MCF 10A (cell line): ENCODE measurements at regions of chr2 and their contacts with region 1.

Region 1: GRCh38 chr2:119264781-119265692 is 41.4 kb downstream of the STEAP3 start:
- DNase-seq: peak; percentile 75
- H3K4me3 Mint-ChIP-seq: no peak overlapping the region
- H3K27ac Mint-ChIP-seq: no peak overlapping the region
- H3K4me1 Mint-ChIP-seq: peaks cover 9% of the 10 kb centered on the region
- H3K27me3 Mint-ChIP-seq: no peaks in the 10 kb centered on the region
- CTCF ChIP-seq: peak; percentile 84

Region 2: DNA sequence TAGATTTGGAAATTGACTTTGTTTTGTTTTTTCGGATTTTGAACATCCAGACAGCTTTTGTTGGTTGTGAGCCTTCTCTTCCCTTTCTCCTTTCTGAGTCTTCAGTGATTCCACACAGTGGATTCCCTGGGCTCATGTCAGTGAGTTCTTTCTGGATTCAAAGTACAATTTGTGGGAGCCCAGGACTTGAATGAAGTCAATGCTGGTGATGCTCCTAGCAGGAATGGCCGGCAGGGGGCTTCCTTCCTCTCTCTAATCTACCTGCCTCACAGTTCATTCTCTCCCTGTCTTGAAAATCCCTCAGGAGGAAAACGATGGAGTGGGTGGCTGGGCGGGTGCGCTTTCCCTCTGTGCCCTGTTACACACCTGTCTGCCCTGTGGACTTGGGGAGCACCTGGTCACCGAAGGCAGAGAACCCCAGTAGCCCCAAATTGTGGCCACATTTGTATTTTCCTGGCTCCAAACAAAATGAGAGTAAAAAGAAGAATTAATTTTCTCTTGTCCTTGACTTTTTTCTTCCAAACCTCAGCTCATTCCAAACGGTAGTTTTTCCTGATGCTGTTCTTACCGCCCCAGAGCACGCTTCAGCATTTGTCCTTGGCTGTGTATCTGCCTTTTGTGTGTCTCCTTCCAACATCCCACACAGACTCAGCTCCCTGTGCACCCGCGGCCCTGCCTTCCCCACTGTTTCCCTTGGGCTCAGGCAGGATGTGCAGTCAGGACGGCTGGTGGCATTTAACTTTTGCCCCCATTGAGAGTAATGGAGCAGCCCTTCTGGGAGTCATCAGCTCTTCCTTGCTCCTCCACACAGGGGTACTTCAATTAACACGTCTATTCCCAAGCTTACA is 236.5 kb before region 1 on chr2:
- CTCF ChIA-PET with region 1: interaction called, 6 read pairs
- POLR2A ChIA-PET with region 1: no interaction called
- intact Hi-C with region 1: loop called (anchors 1 kb)
- DNase-seq: peak; percentile 65
- H3K4me3 Mint-ChIP-seq: no peak overlapping the region
- H3K27ac Mint-ChIP-seq: no peak overlapping the region
- H3K4me1 Mint-ChIP-seq: no peaks in the 10 kb centered on the region
- H3K27me3 Mint-ChIP-seq: peaks cover 48% of the 10 kb centered on the region
- CTCF ChIP-seq: peak; percentile 37

Region 3: DNA sequence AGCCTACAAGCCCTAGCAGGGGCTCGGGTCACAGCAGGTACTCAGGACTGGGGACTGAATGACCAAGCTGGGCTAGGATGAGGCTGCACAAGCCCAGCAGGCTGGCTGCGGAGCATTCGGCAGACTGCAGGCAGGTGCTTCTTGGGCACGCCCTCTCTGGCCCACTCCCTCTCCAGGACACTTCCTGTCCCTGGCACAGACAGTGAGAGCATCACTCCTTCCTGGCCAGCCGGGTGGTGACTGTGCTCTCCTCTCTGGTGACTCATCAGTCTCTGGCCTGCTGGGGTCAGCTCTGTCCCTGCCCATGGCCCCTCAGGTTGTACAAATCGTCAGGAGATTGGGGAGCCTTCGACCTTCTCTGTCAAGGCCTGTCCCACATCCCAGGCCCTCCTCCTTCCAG is 128.9 kb before region 1 on chr2:
- CTCF ChIA-PET with region 1: no interaction called
- POLR2A ChIA-PET with region 1: no interaction called
- intact Hi-C with region 1: no loop called
- DNase-seq: peak; percentile 8
- H3K4me3 Mint-ChIP-seq: no peak overlapping the region
- H3K27ac Mint-ChIP-seq: no peak overlapping the region
- H3K4me1 Mint-ChIP-seq: no peaks in the 10 kb centered on the region
- H3K27me3 Mint-ChIP-seq: peaks cover 63% of the 10 kb centered on the region
- CTCF ChIP-seq: no peak

Region 4: DNA sequence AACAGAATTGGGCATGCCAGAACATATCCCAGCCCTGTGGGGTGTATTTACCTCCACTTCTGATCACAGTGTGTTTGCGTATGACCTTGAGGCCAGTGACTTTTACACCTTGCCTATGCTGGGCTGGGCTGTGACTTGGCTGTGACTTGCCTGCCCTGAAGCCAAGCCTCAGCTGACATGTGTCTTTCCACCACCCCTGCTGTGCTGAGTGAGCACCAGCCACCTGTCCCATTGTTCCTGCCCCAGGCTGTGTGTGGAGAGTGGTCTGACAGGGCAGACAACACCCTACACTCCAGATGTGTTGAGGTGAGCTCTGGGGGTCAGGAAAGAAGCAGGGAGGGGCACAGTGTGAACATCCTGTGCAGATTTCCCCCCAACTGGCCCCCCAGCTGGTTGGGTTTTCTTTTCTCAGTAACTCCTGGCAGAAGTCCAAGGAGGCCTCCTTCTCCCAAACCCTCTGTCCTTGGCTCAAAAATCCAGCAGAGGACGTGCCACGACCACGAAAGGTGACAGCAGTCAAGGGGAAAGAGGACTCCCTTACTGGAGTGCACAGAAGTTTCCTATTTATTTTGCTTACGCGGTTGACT is 46.5 kb before region 1 on chr2:
- CTCF ChIA-PET with region 1: interaction called, 56 read pairs
- POLR2A ChIA-PET with region 1: interaction called, 3 read pairs
- intact Hi-C with region 1: loop called (anchors 1 kb)
- DNase-seq: peak; percentile 87
- H3K4me3 Mint-ChIP-seq: peak overlapping the region; percentile 21
- H3K27ac Mint-ChIP-seq: peak overlapping the region; percentile 91
- H3K4me1 Mint-ChIP-seq: peaks cover 33% of the 10 kb centered on the region
- H3K27me3 Mint-ChIP-seq: no peaks in the 10 kb centered on the region
- CTCF ChIP-seq: peak; percentile 54

Region 5: GRCh38 chr2:119234377-119235019 is 30.5 kb before region 1 on chr2:
- CTCF ChIA-PET with region 1: interaction called, 14 read pairs
- POLR2A ChIA-PET with region 1: interaction called, 3 read pairs
- intact Hi-C with region 1: loop called (anchors 5 kb)
- DNase-seq: peak; percentile 45
- H3K4me3 Mint-ChIP-seq: no peak overlapping the region
- H3K27ac Mint-ChIP-seq: no peak overlapping the region
- H3K4me1 Mint-ChIP-seq: peaks cover 35% of the 10 kb centered on the region
- H3K27me3 Mint-ChIP-seq: no peaks in the 10 kb centered on the region
- CTCF ChIP-seq: peak; percentile 25

Region 6: GRCh38 chr2:119240311-119241202 is 24.5 kb before region 1 on chr2:
- CTCF ChIA-PET with region 1: interaction called, 14 read pairs
- POLR2A ChIA-PET with region 1: no interaction called
- intact Hi-C with region 1: no loop called
- DNase-seq: peak; percentile 91
- H3K4me3 Mint-ChIP-seq: peak overlapping the region; percentile 27
- H3K27ac Mint-ChIP-seq: peak overlapping the region; percentile 82
- H3K4me1 Mint-ChIP-seq: peaks cover 14% of the 10 kb centered on the region
- H3K27me3 Mint-ChIP-seq: no peaks in the 10 kb centered on the region
- CTCF ChIP-seq: no peak

Region 7: GRCh38 chr2:119921825-119922224 is 656.8 kb after region 1 on chr2:
- CTCF ChIA-PET with region 1: no interaction called
- POLR2A ChIA-PET with region 1: no interaction called
- intact Hi-C with region 1: no loop called
- DNase-seq: no peak
- H3K4me3 Mint-ChIP-seq: no peak overlapping the region
- H3K27ac Mint-ChIP-seq: no peak overlapping the region
- H3K4me1 Mint-ChIP-seq: no peaks in the 10 kb centered on the region
- H3K27me3 Mint-ChIP-seq: no peaks in the 10 kb centered on the region
- CTCF ChIP-seq: no peak